ENCODE measurements at regions of chr11 and their contacts with region 1.

Region 1: DNA sequence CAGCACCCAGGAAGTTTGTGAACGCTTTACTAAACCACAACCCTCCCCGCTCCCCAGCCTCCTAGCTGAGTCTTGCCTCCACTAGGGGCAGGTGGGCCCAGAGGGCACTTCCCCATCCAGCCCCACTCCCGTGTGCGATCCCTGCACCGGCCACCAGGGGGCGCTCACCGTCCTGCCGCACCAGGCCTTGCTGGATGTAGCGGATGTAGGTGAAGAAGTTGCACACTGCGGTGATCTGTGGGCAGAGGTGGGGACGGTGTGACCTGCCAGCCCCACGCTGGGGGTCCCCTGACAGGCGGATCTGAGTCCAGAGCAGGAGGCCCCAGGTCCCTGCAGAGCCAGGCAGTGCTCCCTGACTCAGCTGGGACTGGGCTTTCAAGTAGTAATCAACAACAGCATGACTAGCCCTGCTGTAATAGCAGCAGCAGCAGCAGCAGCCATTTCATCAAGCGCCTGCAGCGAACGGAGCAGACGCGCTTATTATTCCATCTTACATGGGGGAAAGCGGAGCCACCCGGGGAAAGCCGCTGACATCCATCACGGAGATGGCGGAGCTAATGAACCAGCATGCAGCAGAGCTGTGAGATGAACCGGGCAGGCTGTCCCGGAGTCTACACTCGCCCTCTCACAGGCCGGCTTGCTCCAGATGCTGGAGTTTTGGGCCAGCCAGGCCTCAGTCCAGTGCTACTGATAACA is 7.9 kb upstream of the FADS3 start:
- DNase-seq: peak; percentile 87 to 96
- ATAC-seq: peak; percentile 72 to 92
- H3K4me3 ChIP-seq: no peak overlapping the region
- H3K27ac ChIP-seq: peak overlapping the region; percentile 66 to 82; a peak in 5 of 6 replicates
- H3K4me1 ChIP-seq: peaks cover 19% of the 10 kb centered on the region
- CTCF ChIP-seq: peak; percentile 97
- EP300 ChIP-seq: no peak
- POLR2A ChIP-seq: no peak
- RAD21 ChIP-seq: peak; percentile 92 to 93

Region 2: GRCh38 chr11:61855939-61856680 is 43.2 kb before region 1 on chr11:
- CTCF ChIA-PET with region 1: interaction called, 16 read pairs
- POLR2A ChIA-PET with region 1: no interaction called
- DNase-seq: no peak
- ATAC-seq: peak; percentile 9 to 21; a peak in 4 of 6 replicates
- H3K4me3 ChIP-seq: no peak overlapping the region
- H3K27ac ChIP-seq: 0 out of 6 replicates have a peak overlapping the region, but pooled peaks of 1 of the 2 experiments have one; percentile 8
- H3K4me1 ChIP-seq: no peaks in the 10 kb centered on the region
- CTCF ChIP-seq: no peak
- EP300 ChIP-seq: no peak
- POLR2A ChIP-seq: no peak
- RAD21 ChIP-seq: no peak

Region 3: DNA sequence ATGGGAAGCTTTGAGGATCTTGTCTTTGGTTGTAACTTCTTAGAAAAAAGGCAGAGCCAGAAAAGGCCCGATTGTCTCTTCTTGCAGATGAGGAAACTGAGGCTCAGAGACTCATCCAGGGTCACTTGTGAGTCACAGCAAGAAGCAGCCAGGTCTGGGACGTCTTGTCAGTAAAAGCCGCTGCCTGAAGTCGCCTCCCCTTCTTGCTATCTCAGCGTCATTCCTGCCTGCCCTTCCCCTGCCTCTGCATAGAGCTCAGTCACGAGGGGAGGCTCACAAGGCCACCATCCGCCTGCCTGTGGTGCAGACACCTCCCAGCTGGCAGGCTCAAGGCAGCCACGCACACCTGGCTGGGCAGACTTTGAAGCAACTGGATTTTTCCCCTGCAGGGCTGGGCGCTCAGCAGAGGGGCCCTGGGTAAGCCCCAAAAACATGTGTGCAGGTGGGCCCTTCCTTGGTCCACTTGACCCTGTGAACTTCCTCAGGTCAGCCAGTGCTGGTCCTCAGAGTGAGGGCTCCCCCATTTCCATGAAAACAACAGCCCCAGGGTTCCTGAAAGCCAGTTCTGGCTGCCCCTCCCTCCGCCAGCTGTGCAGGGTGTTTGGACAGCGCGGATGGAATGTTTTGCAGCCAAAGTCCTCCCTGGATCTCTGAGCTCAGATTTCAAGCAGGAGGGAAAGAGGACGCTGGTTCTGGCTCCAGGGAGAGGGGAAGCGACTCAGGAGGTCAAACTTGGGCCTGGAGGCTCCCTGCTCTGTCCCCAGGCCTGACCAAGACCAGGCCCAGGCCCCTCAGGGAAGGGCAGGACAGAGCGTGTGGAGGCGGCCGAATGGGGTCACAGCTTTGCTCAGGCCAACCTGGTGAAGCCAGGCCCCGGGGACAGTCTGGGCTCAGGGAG is 24.1 kb after region 1 on chr11:
- CTCF ChIA-PET with region 1: interaction called, 60 read pairs
- POLR2A ChIA-PET with region 1: no interaction called
- DNase-seq: no peak
- ATAC-seq: peak in 1 of 2 experiments; percentile 11; a peak in 2 of 6 replicates
- H3K4me3 ChIP-seq: no peak overlapping the region
- H3K27ac ChIP-seq: peak overlapping the region; percentile 31 to 53; a peak in 4 of 6 replicates
- H3K4me1 ChIP-seq: peaks cover 28% of the 10 kb centered on the region
- CTCF ChIP-seq: no peak
- EP300 ChIP-seq: no peak
- POLR2A ChIP-seq: no peak
- RAD21 ChIP-seq: no peak

Region 4: DNA sequence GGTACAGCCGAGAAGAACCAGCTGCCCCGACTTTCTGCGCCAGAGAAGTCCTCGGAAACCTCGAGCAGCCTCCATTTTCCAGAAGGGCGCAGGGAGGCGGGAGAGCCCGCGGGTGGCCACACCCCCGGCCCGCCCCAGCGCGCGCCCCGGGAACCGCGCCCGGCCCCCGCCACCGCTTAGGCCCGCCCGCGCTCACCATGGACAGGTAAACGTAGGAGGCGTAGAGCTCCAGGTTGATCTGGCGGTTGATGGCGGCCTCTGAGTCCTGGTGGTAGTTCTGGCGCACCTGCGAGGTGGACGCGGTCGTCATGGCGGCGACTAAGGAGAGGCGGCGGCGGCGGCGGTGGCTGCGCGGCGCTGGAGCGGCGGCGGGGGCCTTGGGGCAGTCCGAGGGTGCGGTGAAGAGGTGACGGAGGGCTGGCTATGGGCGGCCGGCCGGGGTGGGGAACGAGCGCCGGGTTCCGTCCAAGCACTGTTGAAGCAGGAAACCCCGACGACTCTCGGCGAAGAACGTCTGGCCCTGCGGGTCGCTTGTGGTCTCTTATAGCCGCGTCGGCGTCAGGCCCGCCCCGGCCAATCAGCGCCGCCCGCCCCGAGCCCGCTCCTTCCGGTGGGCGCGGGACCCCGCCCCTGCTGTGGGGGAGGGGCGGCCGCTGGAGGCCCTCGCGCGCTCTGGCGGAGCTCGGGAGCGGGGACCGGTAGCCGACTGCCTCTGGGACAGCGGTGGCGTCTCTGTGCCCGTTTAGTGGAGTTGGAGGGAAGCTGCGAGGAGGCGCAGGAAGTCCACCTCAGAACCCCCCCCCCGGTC is 68.0 kb after region 1 on chr11 and contains the start of gene FTH1:
- CTCF ChIA-PET with region 1: interaction called, 92 read pairs
- POLR2A ChIA-PET with region 1: interaction called, 4 read pairs
- DNase-seq: peak; percentile 77 to 95
- ATAC-seq: peak; percentile 16 to 62
- H3K4me3 ChIP-seq: peak within 1 kb of the TSS; percentile 96
- H3K27ac ChIP-seq: peak within 1 kb of the TSS; percentile 97 to 99
- H3K4me1 ChIP-seq: peaks cover 59% of the 10 kb centered on the region
- CTCF ChIP-seq: no peak
- EP300 ChIP-seq: no peak; a peak in 1 of 5 replicates
- POLR2A ChIP-seq: peak; percentile 93
- RAD21 ChIP-seq: peak in 1 of 2 experiments; percentile 44; a peak in 2 of 5 replicates
- polyA plus RNA-seq, gene FTH1: 2,791 and 4,959 TPM in 2 replicates

Region 5: DNA sequence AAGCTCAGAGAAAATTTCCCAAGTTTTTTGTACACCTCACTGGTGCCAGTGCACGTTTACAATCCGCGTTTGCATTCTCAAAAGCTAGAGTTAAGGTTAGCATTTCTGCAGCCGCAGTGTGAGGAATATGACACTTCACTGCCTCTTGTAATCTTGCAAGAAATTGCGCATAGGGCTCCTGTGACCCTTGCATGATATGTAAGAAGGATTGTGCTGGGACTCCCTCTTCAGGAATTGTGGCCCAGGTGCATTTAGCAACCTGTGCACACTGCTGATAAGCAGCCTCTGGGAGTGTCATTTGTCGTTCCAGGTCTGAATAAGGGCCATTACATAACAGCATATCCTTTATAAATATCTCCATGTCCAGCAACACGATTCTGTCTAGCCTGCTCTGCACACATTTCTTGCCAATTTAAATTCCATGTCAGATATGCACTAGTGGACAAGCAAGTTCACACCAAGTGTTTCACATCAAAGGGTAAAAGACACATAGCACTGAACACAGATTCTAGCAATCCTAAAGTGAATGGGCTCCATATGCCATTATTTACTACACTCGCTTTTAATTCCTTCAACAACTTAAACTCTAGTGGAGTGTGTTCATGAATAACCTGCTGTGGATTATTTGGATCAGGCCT is 155.3 kb after region 1 on chr11:
- CTCF ChIA-PET with region 1: interaction called, 103 read pairs
- POLR2A ChIA-PET with region 1: no interaction called
- DNase-seq: peak; percentile 53 to 92
- ATAC-seq: peak; percentile 94 to 99
- H3K4me3 ChIP-seq: no peak overlapping the region
- H3K27ac ChIP-seq: peak overlapping the region; percentile 79 to 87
- H3K4me1 ChIP-seq: peaks cover 16% of the 10 kb centered on the region
- CTCF ChIP-seq: peak; percentile 91
- EP300 ChIP-seq: no peak
- POLR2A ChIP-seq: no peak
- RAD21 ChIP-seq: peak; percentile 97 to 98

Region 6: GRCh38 chr11:62108017-62108750 is 208.9 kb after region 1 on chr11:
- CTCF ChIA-PET with region 1: interaction called, 215 read pairs
- POLR2A ChIA-PET with region 1: no interaction called
- DNase-seq: peak; percentile 49 to 74
- ATAC-seq: peak; percentile 73 to 82; a peak in 4 of 6 replicates
- H3K4me3 ChIP-seq: no peak overlapping the region
- H3K27ac ChIP-seq: peak overlapping the region in 1 of 2 experiments; percentile 29; a peak in 2 of 6 replicates
- H3K4me1 ChIP-seq: peaks cover 13% of the 10 kb centered on the region; the same call in 1 of the 3 replicates
- CTCF ChIP-seq: peak; percentile 93
- EP300 ChIP-seq: no peak
- POLR2A ChIP-seq: no peak
- RAD21 ChIP-seq: peak; percentile 91 to 96

Measured in A549 (cell line).